ENCODE measurements at regions of chr1 and their contacts with region 1.

Region 1: DNA sequence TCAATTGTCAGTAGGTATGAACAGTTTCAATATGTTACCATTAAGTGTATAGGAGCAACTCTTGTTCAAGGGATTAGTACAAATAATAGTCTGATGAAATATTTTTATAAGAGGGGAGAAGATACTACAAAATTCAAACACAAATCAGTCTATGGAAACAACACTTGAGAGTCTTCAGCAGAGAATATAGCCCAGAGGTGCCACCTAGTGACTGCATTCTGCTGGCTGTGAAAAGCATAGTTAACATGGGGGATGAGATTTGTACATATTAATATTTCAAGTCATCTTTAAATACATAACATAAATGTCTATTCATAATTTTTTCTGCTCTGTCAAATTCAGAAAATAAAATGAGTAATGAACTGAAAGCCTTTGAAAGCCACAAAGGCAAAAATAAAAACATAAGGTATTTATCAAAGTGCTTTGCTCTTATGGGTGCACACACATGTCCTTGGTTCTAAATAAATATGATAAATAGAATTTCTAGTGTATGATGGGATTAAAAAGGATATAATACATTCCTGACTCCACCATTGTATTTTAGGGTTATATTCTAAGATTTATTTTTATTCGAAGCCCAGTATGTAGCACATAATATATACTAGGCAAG is 440.9 kb upstream of the ZRANB2 start:
- H3K4me3 Mint-ChIP-seq: no peak overlapping the region
- H3K27ac Mint-ChIP-seq: no peak overlapping the region
- H3K4me1 Mint-ChIP-seq: no peaks in the 10 kb centered on the region
- H3K27me3 Mint-ChIP-seq: no peaks in the 10 kb centered on the region

Region 2: DNA sequence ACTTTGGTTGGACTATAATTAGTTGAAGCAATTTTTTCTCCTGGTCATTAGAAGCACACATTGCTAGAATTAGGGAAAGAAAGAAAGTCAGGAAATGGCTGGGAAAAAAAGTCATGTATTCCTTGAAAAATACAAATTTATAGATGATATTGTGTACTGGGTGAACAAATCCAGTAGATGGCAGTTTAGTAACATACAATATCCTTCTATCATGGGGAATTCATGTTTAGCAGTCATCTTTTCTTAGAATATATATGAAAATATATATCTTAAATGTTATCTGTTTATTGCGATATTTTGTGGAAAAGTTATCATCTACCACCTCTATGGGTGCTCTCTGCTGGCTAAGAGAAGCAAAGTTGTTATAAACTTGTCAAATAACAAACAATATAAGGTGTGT is 427.8 kb before region 1 on chr1:
- intact Hi-C with region 1: loop called (anchors 5 kb)
- H3K4me3 Mint-ChIP-seq: no peak overlapping the region
- H3K27ac Mint-ChIP-seq: no peak overlapping the region
- H3K4me1 Mint-ChIP-seq: no peaks in the 10 kb centered on the region
- H3K27me3 Mint-ChIP-seq: no peaks in the 10 kb centered on the region

Region 3: DNA sequence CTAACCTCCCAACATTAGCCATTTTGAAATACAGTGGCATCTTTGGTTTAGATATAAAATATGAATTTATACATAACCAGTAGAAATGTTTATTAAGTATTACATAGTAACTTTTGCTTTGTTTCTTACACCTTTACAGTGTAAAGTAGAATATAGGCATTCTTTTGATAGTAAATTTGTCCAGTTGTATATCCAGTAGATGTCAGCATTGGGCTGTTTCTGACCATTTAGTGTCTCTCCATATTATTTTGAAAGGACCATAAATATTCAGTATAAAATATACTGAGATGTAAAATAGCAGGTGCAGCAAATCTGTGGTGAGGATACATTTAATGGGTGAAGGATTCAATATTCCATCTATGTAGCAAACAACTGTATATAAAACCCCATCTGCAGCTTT is 325.1 kb before region 1 on chr1:
- intact Hi-C with region 1: loop called (anchors 5 kb)
- H3K4me3 Mint-ChIP-seq: no peak overlapping the region
- H3K27ac Mint-ChIP-seq: no peak overlapping the region
- H3K4me1 Mint-ChIP-seq: no peaks in the 10 kb centered on the region
- H3K27me3 Mint-ChIP-seq: no peaks in the 10 kb centered on the region

Region 4: DNA sequence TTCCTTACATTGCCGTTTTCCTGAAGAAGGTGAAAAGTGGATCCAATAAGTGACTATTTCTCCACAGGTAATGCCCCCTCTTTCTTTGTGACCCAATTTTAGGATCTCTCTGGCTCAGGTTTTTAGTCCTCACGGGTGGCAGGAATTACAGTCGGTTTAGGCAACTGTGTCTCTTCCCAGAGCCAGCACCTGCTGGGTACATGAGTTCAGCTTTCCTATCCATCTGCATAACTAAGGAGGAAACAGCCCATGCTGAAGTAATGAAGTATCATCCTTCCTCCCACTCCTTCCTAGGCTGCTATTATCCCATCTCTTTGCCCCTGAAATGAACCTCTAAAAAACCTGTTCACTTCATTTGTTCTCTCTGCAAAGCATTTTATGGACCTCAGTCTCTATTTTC is 216.0 kb after region 1 on chr1:
- intact Hi-C with region 1: no loop called
- H3K4me3 Mint-ChIP-seq: no peak overlapping the region
- H3K27ac Mint-ChIP-seq: no peak overlapping the region
- H3K4me1 Mint-ChIP-seq: no peaks in the 10 kb centered on the region
- H3K27me3 Mint-ChIP-seq: no peaks in the 10 kb centered on the region

Region 5: GRCh38 chr1:71850515-71850914 is 328.8 kb after region 1 on chr1:
- intact Hi-C with region 1: no loop called
- H3K4me3 Mint-ChIP-seq: no peak overlapping the region
- H3K27ac Mint-ChIP-seq: no peak overlapping the region
- H3K4me1 Mint-ChIP-seq: no peaks in the 10 kb centered on the region
- H3K27me3 Mint-ChIP-seq: no peaks in the 10 kb centered on the region

Measured in dendritic cell treated with granulocyte-macrophage colony-stimulating factor and Interleukin-4, amounts not matched to agents 40 ng/mL and 50 ng/mL, for 4 days (primary cell).